ENCODE measurements at regions of chr17 and their contacts with region 1.

Region 1: GRCh38 chr17:66819466-66819865 is 15.5 kb upstream of the CACNG5 start:
- DNase-seq: no peak
- H3K4me3 Mint-ChIP-seq: no peak overlapping the region
- H3K27ac Mint-ChIP-seq: no peak overlapping the region
- H3K4me1 Mint-ChIP-seq: no peaks in the 10 kb centered on the region
- H3K27me3 Mint-ChIP-seq: no peaks in the 10 kb centered on the region
- CTCF ChIP-seq: no peak

Region 2: DNA sequence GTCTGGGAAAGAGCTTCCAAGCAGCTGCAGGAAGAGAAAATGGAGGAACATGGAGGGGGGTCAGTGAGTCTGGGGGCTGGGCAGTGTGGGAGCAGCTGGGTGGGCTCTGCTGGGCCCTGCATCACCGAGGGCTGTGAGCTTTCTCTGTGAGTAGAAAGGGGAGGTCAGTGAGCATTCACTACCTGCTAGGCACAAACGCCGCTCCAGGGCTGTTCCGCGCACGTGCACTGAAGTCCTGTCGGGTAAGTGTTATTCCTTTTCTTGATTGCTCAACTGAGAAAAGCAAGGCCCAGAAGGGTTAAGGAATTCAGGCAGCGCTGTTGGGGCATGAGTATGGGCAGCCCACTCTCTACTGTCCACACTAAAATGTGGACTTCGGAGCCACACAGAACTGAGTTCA is 20.1 kb after region 1 on chr17:
- CTCF ChIA-PET with region 1: no interaction called
- POLR2A ChIA-PET with region 1: no interaction called
- intact Hi-C with region 1: loop called (anchors 1 kb)
- DNase-seq: no peak
- H3K4me3 Mint-ChIP-seq: no peak overlapping the region
- H3K27ac Mint-ChIP-seq: no peak overlapping the region
- H3K4me1 Mint-ChIP-seq: no peaks in the 10 kb centered on the region
- H3K27me3 Mint-ChIP-seq: peaks cover 24% of the 10 kb centered on the region
- CTCF ChIP-seq: no peak